Vagina (tissue), 2 donors: ENCODE measurements at regions of chr19 and their contacts with region 1.

Region 1: GRCh38 chr19:12139885-12140547 is at the start of gene ZNF20:
- DNase-seq: peak in 1 of 2 donors; percentile 97
- H3K4me3 ChIP-seq: peak within 1 kb of the TSS; percentile 78 to 99
- H3K27ac ChIP-seq: peak within 1 kb of the TSS; percentile 66
- H3K4me1 ChIP-seq: peaks cover 19% of the 10 kb centered on the region
- H3K27me3 ChIP-seq: no peaks in the 10 kb centered on the region
- CTCF ChIP-seq: no peak
- POLR2A ChIP-seq: no peak
- total RNA-seq, gene ZNF20: 1.5 TPM

Region 2: DNA sequence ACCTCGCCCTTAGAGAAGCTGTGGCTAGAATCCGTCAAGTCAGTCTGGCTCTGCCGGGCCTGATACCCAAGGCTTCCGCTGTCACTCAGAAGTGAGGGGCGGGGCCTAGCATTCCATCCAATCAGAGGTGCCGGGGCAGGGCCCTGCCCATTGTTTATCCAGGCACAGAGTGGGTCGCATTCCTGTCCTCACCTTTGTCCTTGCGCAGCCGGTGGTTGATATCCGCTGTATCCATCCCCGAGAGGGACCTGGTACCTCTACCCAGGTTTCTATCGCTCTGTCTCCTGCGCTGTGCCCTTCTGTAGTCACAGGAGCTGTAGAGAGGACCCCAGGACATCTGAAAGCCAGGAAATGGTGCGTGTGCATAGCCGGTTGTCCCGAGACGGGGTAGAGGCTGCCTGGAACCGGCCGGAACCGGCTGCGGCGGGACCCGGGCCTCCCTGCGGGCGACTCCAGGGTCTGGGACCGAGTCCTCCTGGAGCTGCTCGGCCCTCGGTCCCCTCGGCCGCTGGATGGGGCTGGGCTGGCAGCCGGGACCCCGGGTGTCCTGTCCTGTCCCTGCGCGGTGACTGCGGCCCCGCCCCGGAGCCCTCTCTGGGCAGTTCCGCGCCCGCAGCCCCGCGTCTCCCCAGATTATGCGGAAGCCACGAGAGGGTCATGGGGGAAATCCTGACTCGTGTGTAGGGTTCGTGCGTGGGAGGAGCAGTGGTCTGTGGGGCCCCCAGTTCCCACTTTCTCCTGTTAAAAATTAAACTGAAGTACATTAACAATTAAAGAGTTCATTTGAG is 175.0 kb before region 1 on chr19 and contains the start of gene ZNF763:
- intact Hi-C with region 1: loop called (anchors 10 kb)
- DNase-seq: peak in 1 of 2 donors; percentile 92
- H3K4me3 ChIP-seq: peak within 1 kb of the TSS; percentile 69 to 85
- H3K27ac ChIP-seq: peak within 1 kb of the TSS; percentile 97
- H3K4me1 ChIP-seq: peaks cover 23% of the 10 kb centered on the region
- H3K27me3 ChIP-seq: no peaks in the 10 kb centered on the region
- CTCF ChIP-seq: peak in 1 of 3 experiments; percentile 15
- POLR2A ChIP-seq: no peak
- total RNA-seq, gene ZNF763: 2.9 TPM

Region 3: GRCh38 chr19:12064590-12065538 is 75.2 kb before region 1 on chr19 and contains the start of gene ZNF844:
- intact Hi-C with region 1: loop called (anchors 5 kb)
- DNase-seq: peak in 1 of 2 donors; percentile 94
- H3K4me3 ChIP-seq: peak within 1 kb of the TSS; percentile 76 to 97
- H3K27ac ChIP-seq: peak within 1 kb of the TSS; percentile 92
- H3K4me1 ChIP-seq: peaks cover 5% of the 10 kb centered on the region
- H3K27me3 ChIP-seq: no peaks in the 10 kb centered on the region
- CTCF ChIP-seq: no peak
- POLR2A ChIP-seq: peak; percentile 60 to 61
- total RNA-seq, gene ZNF844: 7.4 TPM